Panc1 (cell line): ENCODE measurements at regions of chr10 and their contacts with region 1.

Region 1: DNA sequence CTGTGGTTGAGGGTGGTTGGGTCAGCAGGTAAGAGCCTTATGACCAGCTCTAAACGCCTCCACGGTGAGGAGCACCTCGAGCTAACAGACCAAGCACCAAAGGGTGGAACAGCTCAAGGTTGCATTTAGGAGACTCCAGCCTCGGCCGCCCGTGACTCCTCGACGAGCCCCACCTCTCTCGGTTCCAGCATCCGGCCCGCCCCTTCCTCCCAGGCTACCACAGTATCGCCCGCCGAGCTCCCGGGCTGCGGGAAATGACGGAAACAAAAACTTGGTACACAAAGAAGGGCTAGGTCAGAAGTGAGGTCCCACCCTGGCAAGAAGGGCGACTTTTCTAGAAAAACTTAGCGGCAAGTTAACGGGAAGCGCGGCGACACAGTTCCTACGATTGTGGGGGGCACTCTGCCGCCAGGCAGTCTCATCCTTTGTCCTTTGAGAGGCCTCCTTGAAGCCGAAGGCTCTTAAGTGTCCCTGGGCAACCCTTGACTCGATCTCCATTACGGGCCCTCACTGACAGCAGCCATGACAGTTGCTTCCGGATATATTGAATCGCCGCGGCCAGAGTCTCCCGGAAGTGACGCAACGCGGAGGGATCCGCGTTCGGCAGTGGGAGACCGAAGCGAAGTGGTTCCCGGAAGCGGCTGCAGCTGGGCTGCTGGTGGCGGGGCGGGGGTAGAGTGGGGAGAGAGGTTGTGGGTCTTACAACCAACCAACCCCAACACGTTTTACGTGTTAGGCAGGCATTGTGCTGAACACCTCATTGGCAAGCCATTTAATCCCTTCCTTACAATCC is 40.2 kb upstream of the ZNF518A start:
- DNase-seq: peak; percentile 66
- ATAC-seq: peak; percentile 98
- H3K4me3 ChIP-seq: peak overlapping the region; percentile 70 to 92
- H3K27ac ChIP-seq: peak overlapping the region; percentile 91
- H3K4me1 ChIP-seq: peaks cover 3% of the 10 kb centered on the region; the same call in 1 of the 2 replicates
- H3K27me3 ChIP-seq: peaks cover 17% of the 10 kb centered on the region
- CTCF ChIP-seq: no peak

Region 2: DNA sequence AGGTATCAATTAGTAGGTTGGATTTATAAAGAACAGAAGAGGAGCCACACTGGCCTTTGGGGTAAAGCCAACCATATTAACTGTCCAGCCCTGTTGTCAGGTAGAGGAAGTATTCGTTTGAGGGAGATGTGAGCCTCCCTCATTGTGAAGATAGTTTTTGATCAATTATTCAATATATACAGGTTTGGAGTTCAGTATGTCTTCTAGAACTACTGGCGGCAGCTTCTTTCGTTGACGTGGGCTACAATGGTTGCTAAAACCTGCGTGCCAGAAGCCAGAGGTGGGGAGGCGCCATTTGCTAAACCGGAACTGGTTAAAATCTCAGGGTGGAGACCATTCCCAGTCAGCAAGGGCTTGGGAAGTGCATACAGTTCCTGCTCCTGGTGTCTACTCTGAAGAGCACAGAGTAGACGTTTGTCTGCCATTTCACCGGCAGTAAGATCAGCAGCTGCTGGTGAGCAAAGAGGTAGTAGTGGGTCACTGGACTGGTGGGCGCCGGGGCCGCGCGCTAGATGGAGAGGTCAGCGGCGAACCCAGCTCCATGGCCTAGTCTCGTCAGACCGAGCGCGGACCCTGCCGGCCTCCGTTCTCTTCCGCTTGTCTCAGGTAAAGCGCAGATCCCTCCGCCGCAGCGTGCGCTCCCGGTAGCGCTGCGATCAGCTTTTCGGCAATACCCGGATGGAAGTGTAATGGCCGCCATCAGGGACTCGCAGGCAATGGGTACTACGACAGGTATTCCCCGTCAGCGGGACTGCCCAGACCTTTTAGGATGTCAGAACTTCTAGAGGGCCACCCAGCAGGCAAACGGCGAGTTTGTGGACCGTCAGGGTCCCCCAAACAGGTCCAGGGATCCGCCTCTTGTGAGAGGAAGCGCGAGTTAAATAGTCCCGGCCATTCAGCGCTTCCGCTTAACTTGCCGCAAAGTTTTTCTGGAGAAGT is 39.8 kb after region 1 on chr10 and contains the start of gene ZNF518A:
- CTCF ChIA-PET with region 1: no interaction called
- POLR2A ChIA-PET with region 1: interaction called, 6 read pairs
- in situ Hi-C with region 1: no loop called
- intact Hi-C with region 1: loop called (anchors 1 kb)
- DNase-seq: peak; percentile 82
- ATAC-seq: peak; percentile 91
- H3K4me3 ChIP-seq: peak within 1 kb of the TSS; percentile 77 to 82
- H3K27ac ChIP-seq: peak within 1 kb of the TSS; percentile 99
- H3K4me1 ChIP-seq: peaks cover 18% of the 10 kb centered on the region
- H3K27me3 ChIP-seq: peaks cover 3% of the 10 kb centered on the region
- CTCF ChIP-seq: no peak
- total RNA-seq, gene ZNF518A: 26.1 TPM